ENCODE measurements at regions of chr19 and their contacts with region 1.

Region 1: GRCh38 chr19:21202865-21203494 is 61.1 kb downstream of the ZNF431 start:
- DNase-seq: no peak
- H3K4me3 ChIP-seq: no peak overlapping the region
- H3K27ac ChIP-seq: no peak overlapping the region
- H3K4me1 ChIP-seq: no peaks in the 10 kb centered on the region
- H3K27me3 ChIP-seq: no peaks in the 10 kb centered on the region
- CTCF ChIP-seq: peak in 9 of 11 experiments; percentile 27 to 73 (median 53)
- POLR2A ChIP-seq: no peak

Region 2: GRCh38 chr19:21463449-21464105 is 260.6 kb after region 1 on chr19:
- intact Hi-C with region 1: loop called (anchors 10 kb)
- DNase-seq: peak; percentile 74
- H3K4me3 ChIP-seq: peak overlapping the region in 5 of 8 donors; percentile 16 to 61 (median 32)
- H3K27ac ChIP-seq: no peak overlapping the region
- H3K4me1 ChIP-seq: peaks cover 0 to 11% (median 5%) of the 10 kb centered on the region in 6 donors
- H3K27me3 ChIP-seq: peaks cover 0 to 17% (median 0%) of the 10 kb centered on the region in 7 donors
- CTCF ChIP-seq: no peak
- POLR2A ChIP-seq: no peak

Measured in spleen (tissue), 13 donors.